PC-3 (cell line): ENCODE measurements at regions of chr2 and their contacts with region 1.

Region 1: DNA sequence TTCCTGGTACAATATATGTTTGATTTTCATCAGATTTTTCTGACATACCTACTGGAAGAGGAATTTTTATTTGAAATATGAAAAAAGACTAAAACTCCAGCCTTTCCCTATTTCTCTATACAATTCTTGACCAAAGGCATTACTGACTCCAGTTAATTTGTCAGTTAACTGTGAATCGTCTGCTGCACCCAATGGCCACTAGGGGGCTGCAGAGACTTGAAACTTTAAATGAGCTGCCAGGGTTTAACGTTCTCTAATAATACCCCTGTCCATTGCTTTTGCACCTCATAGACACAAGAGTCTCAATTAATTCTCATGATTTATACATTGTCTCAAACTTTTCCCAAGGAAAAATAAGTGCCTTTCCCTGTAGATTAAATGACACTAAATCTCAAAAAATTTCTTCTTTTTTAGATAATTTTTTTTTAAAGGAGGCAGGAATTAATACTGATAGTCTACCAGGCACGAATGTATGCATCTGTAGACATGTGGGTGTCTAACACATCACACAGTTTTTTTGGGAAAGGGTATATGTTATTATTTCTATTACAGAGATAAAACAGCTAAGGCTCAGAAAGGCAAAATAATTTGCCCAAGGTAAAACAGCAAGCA is 1.8 kb upstream of the ALK start:
- DNase-seq: peak; percentile 81
- ATAC-seq: no peak
- H3K4me3 ChIP-seq: no peak overlapping the region
- H3K27ac ChIP-seq: no peak overlapping the region
- H3K4me1 ChIP-seq: peaks cover 13% of the 10 kb centered on the region; the same call in 1 of the 2 replicates
- H3K27me3 ChIP-seq: peaks cover 11% of the 10 kb centered on the region; the same call in 1 of the 2 replicates
- CTCF ChIP-seq: peak; percentile 94

Region 2: DNA sequence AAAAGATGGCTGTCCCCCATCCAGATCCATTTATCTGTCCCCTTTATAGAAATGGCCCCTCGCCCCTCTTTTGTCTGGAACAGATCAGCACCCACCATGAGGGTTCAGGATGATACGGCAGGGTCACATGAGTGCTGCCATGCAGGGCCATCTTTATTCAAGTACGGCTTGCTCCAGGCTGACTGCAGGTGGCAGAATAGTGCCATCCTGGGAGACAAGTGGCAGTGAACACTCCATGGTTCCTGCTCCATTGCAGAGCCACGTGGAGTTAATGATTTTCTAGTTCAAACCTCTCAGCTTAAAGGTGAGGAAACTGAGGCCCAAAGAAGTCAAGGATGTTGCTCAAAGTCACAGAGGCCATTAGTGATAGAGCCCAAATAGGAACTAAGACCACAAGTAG is 627.4 kb before region 1 on chr2:
- CTCF ChIA-PET with region 1: interaction called, 3 read pairs
- POLR2A ChIA-PET with region 1: no interaction called
- intact Hi-C with region 1: loop called (anchors 5 kb)
- DNase-seq: peak; percentile 61
- ATAC-seq: peak; percentile 82
- H3K4me3 ChIP-seq: no peak overlapping the region
- H3K27ac ChIP-seq: no peak overlapping the region
- H3K4me1 ChIP-seq: no peaks in the 10 kb centered on the region
- H3K27me3 ChIP-seq: 0 out of 2 replicates have a peak, but pooled peaks cover 10% of the 10 kb centered on the region
- CTCF ChIP-seq: peak; percentile 78

Region 3: GRCh38 chr2:29663268-29663667 is 259.9 kb before region 1 on chr2:
- CTCF ChIA-PET with region 1: no interaction called
- POLR2A ChIA-PET with region 1: no interaction called
- intact Hi-C with region 1: loop called (anchors 5 kb)
- DNase-seq: peak; percentile 83
- ATAC-seq: peak; percentile 75
- H3K4me3 ChIP-seq: peak overlapping the region; percentile 31
- H3K27ac ChIP-seq: peak overlapping the region; percentile 96
- H3K4me1 ChIP-seq: peaks cover 42% of the 10 kb centered on the region
- H3K27me3 ChIP-seq: no peaks in the 10 kb centered on the region
- CTCF ChIP-seq: no peak

Region 4: GRCh38 chr2:30026087-30027055 is 103.2 kb after region 1 on chr2:
- CTCF ChIA-PET with region 1: interaction called, 6 read pairs
- POLR2A ChIA-PET with region 1: no interaction called
- intact Hi-C with region 1: loop called (anchors 1 kb)
- DNase-seq: peak; percentile 96
- ATAC-seq: peak; percentile 93
- H3K4me3 ChIP-seq: peak overlapping the region; percentile 19; the same call in 1 of the 2 replicates
- H3K27ac ChIP-seq: peak overlapping the region; percentile 77
- H3K4me1 ChIP-seq: peaks cover 33% of the 10 kb centered on the region
- H3K27me3 ChIP-seq: no peaks in the 10 kb centered on the region
- CTCF ChIP-seq: peak; percentile 94

Region 5: DNA sequence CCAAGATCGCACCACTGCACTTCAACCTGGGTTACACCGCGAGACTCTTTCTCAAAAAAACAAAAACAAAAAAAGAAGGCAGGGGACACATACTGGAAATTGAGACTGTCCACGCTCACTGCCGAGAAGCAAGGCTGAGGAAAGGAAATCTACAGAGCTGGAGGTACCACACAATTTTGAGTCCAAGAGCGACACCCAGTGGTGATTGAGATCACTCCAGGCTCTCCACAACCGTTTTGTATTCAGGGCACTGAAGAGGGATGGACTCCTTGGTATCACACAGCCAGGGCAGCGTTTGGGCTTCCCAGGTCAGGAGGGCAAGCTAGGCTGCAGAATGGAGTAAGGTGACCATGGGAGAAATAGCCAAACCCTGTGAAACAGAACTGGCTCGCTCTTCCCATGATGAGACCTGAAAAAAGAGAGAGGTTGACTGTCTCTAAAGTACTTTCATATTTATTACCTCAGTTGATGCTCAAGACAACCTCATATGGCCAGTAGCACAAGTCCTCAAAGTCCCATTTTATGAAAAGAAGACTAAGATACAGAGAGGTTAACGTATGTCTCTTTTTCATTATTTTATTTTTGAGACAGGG is 149.1 kb after region 1 on chr2:
- CTCF ChIA-PET with region 1: interaction called, 5 read pairs
- POLR2A ChIA-PET with region 1: no interaction called
- intact Hi-C with region 1: loop called (anchors 1 kb)
- DNase-seq: peak; percentile 91
- ATAC-seq: peak; percentile 98
- H3K4me3 ChIP-seq: no peak overlapping the region
- H3K27ac ChIP-seq: no peak overlapping the region
- H3K4me1 ChIP-seq: peaks cover 11% of the 10 kb centered on the region; the same call in 1 of the 2 replicates
- H3K27me3 ChIP-seq: 0 out of 2 replicates have a peak, but pooled peaks cover 7% of the 10 kb centered on the region
- CTCF ChIP-seq: peak; percentile 84

Region 6: DNA sequence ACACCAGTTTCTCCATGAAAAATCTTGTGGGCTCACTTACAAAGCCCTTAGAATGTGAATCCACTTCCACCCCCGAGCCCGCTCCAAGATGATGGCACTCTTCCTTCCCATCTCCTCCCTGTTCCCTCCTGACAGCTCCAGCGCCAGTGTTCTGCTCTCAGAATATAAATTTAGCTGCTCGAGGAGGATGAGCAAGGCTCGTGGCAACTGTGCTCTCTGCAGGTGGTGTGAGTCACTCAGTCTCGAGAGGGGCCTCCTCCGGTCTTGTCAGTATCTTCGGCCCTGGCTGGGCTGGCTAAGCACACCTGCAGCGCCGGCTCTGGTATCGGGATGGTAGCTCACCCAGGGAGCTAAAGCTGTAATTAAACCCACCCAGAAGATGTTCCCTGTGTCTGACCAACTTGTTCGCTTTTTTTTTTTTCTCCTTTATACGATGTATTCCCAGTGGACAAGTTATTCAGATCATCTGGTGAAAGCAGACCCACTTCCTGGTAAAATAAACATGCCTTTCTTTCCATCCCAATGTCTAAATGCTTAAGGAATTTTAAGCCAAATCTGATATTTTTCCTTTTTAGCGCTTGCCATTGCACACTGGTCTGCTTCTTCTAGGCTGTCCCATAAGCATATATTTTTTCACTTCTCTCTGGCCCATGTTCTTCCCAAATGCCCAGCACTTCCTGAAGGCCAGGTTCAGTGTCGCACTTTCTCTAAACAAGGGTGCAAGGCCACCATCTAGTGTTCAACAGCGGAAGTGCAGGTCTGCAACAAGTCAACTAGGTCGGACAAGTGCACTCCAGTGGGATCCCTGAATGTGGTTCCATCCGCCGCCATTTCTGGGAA is 192.1 kb after region 1 on chr2:
- CTCF ChIA-PET with region 1: no interaction called
- POLR2A ChIA-PET with region 1: no interaction called
- intact Hi-C with region 1: loop called (anchors 1 kb)
- DNase-seq: peak; percentile 88
- ATAC-seq: peak; percentile 56
- H3K4me3 ChIP-seq: no peak overlapping the region
- H3K27ac ChIP-seq: peak overlapping the region; percentile 11; the same call in 1 of the 2 replicates
- H3K4me1 ChIP-seq: peaks cover 33% of the 10 kb centered on the region
- H3K27me3 ChIP-seq: no peaks in the 10 kb centered on the region
- CTCF ChIP-seq: peak; percentile 96